ENCODE measurements at regions of chr18 and their contacts with region 1.

Region 1: GRCh38 chr18:77899972-77900754 is 650.5 kb downstream of the GALR1 start:
- DNase-seq: peak in 8 of 9 experiments; percentile 26 to 73 (median 47)
- ATAC-seq: peak; percentile 97
- H3K4me3 ChIP-seq: peak overlapping the region; percentile 6 to 46
- H3K4me3 Mint-ChIP-seq: peak overlapping the region; percentile 49
- H3K27ac ChIP-seq: no peak overlapping the region
- H3K27ac Mint-ChIP-seq: no peak overlapping the region
- H3K4me1 ChIP-seq: peaks cover 5% of the 10 kb centered on the region
- H3K4me1 Mint-ChIP-seq: peaks cover 6% of the 10 kb centered on the region
- H3K27me3 ChIP-seq: no peaks in the 10 kb centered on the region
- H3K27me3 Mint-ChIP-seq: peaks cover 23% of the 10 kb centered on the region
- CTCF ChIP-seq: peak; percentile 67

Region 2: DNA sequence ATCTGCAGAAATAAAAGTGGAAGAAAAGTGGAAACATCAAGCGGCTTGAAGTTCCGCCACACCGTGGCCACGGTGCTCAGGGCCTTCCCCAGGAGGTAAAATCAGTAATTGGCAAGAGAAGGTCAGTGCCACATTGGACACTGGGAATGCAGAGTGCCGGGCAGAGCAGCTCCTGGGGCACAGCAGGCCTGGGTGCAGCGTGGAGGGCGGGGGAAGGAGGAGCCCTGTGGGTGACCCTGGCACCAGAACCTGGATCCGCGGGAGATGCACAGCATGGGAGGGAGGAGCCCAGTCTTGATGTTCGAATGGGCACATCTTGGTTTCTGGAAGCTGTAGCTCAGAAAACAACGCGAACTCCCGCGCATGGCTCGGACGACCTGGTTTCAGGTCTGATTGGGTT is 20.3 kb before region 1 on chr18:
- CTCF ChIA-PET with region 1: no interaction called
- POLR2A ChIA-PET with region 1: no interaction called
- intact Hi-C with region 1: no loop called
- DNase-seq: no peak
- ATAC-seq: no peak
- H3K4me3 ChIP-seq: no peak overlapping the region
- H3K4me3 Mint-ChIP-seq: no peak overlapping the region
- H3K27ac ChIP-seq: no peak overlapping the region
- H3K27ac Mint-ChIP-seq: no peak overlapping the region
- H3K4me1 ChIP-seq: no peaks in the 10 kb centered on the region
- H3K4me1 Mint-ChIP-seq: no peaks in the 10 kb centered on the region
- H3K27me3 ChIP-seq: peaks cover 0 to 2% of the 10 kb centered on the region in 2 experiments
- H3K27me3 Mint-ChIP-seq: peaks cover 9% of the 10 kb centered on the region
- CTCF ChIP-seq: no peak

Region 3: DNA sequence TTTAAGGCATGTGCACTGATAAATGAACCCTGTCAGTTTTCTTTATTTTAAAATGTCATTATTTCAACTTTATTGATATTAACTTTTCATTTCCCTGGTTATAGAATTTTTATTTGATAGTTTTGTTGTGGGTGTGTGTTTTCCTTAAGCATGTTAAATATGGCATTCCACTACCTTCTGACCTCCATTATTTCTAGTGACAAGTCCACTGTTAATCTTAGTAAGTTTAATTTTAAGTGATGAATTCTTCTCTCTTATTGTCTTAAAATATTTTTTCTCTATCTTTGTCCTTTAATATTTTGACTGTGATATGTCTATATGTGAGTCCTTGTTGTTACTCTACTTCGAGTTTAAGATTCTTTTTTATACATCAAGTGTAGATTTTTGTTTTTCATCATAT is 35.2 kb after region 1 on chr18:
- CTCF ChIA-PET with region 1: no interaction called
- POLR2A ChIA-PET with region 1: no interaction called
- intact Hi-C with region 1: loop called in 1 of 2 experiments (anchors 1 kb)
- DNase-seq: no peak
- ATAC-seq: no peak
- H3K4me3 ChIP-seq: no peak overlapping the region
- H3K4me3 Mint-ChIP-seq: no peak overlapping the region
- H3K27ac ChIP-seq: no peak overlapping the region
- H3K27ac Mint-ChIP-seq: no peak overlapping the region
- H3K4me1 ChIP-seq: no peaks in the 10 kb centered on the region
- H3K4me1 Mint-ChIP-seq: no peaks in the 10 kb centered on the region
- H3K27me3 ChIP-seq: no peaks in the 10 kb centered on the region
- H3K27me3 Mint-ChIP-seq: peaks cover 7% of the 10 kb centered on the region
- CTCF ChIP-seq: no peak

Region 4: GRCh38 chr18:79749251-79750191 is 1849.4 kb after region 1 on chr18:
- CTCF ChIA-PET with region 1: no interaction called
- POLR2A ChIA-PET with region 1: no interaction called
- intact Hi-C with region 1: no loop called
- DNase-seq: no peak
- ATAC-seq: no peak
- H3K4me3 ChIP-seq: no peak overlapping the region
- H3K4me3 Mint-ChIP-seq: no peak overlapping the region
- H3K27ac ChIP-seq: no peak overlapping the region
- H3K27ac Mint-ChIP-seq: no peak overlapping the region
- H3K4me1 ChIP-seq: no peaks in the 10 kb centered on the region
- H3K4me1 Mint-ChIP-seq: peaks cover 3% of the 10 kb centered on the region
- H3K27me3 ChIP-seq: no peaks in the 10 kb centered on the region
- H3K27me3 Mint-ChIP-seq: no peaks in the 10 kb centered on the region
- CTCF ChIP-seq: no peak